Transverse colon (tissue), 4 donors: ENCODE measurements at regions of chr14 and their contacts with region 1.

Region 1: GRCh38 chr14:63276492-63277342 is 42.0 kb downstream of the GPHB5 start:
- DNase-seq: no peak
- H3K4me3 ChIP-seq: no peak overlapping the region
- H3K27ac ChIP-seq: no peak overlapping the region
- H3K4me1 ChIP-seq: no peaks in the 10 kb centered on the region
- H3K27me3 ChIP-seq: no peaks in the 10 kb centered on the region
- CTCF ChIP-seq: peak; percentile 67 to 79 (median 69)
- EP300 ChIP-seq: no peak
- POLR2A ChIP-seq: no peak

Region 2: DNA sequence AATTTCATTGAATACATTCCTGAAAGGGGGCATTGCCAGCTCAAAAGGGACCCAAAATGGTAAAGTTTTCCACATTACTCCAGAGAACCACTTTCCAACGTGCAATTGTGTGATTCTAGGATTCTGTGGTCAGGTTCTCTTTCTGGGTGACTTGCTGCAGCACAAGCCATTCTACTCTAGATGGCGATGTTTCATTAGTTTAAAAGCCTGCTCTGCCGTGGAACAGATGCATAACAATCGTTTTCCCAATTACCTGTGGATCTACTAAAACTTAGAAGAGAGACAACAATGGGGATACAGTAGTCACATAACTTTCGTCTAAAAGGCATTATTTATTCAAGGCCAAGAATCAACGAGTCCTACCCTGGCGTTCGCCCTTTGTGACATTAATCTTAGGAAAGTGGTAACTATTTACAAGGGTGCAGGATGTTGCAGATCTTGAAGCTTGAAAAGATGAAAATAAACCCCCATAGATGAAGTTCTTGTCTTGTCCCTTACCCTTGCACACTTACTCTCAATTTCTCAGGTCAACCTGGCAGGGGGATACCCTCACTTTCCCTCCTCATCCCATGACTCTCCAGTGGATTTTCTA is 1113.6 kb before region 1 on chr14:
- in situ Hi-C with region 1: loop called in 1 of 4 experiments (anchors 25 kb)
- intact Hi-C with region 1: no loop called
- DNase-seq: no peak
- H3K4me3 ChIP-seq: no peak overlapping the region
- H3K27ac ChIP-seq: no peak overlapping the region
- H3K4me1 ChIP-seq: no peaks in the 10 kb centered on the region
- H3K27me3 ChIP-seq: no peaks in the 10 kb centered on the region
- CTCF ChIP-seq: peak; percentile 37 to 52 (median 43)
- EP300 ChIP-seq: no peak
- POLR2A ChIP-seq: no peak

Region 3: GRCh38 chr14:62179367-62180018 is 1097.2 kb before region 1 on chr14:
- in situ Hi-C with region 1: loop called in 3 of 4 experiments (anchors 25 kb)
- intact Hi-C with region 1: no loop called
- DNase-seq: peak; percentile 15
- H3K4me3 ChIP-seq: no peak overlapping the region
- H3K27ac ChIP-seq: no peak overlapping the region
- H3K4me1 ChIP-seq: no peaks in the 10 kb centered on the region
- H3K27me3 ChIP-seq: no peaks in the 10 kb centered on the region
- CTCF ChIP-seq: peak in 3 of 5 experiments; percentile 8 to 24 (median 24)
- EP300 ChIP-seq: no peak
- POLR2A ChIP-seq: no peak

Region 4: DNA sequence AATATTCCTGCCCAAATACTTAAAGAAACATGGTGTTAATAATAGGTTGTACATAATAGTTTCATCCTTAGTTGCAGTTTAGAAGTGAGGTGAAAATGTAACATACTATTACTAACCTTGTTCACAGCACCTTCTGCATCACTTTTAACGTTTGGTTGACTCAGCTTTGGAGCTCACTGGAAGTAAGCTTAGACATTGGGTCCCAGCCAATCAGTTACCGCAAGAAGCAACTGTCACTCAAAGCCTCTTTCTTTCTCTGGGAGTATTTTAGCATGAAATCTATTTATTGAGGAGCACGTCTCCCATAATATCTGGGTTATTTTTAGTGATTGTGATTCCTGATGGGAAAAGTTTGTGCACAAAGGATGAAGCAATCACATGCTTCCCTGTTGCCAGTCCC is 1041.9 kb before region 1 on chr14:
- in situ Hi-C with region 1: no loop called
- intact Hi-C with region 1: no loop called
- DNase-seq: no peak
- H3K4me3 ChIP-seq: no peak overlapping the region
- H3K27ac ChIP-seq: no peak overlapping the region
- H3K4me1 ChIP-seq: no peaks in the 10 kb centered on the region
- H3K27me3 ChIP-seq: no peaks in the 10 kb centered on the region
- CTCF ChIP-seq: no peak
- EP300 ChIP-seq: no peak
- POLR2A ChIP-seq: no peak

Region 5: GRCh38 chr14:63174760-63175211 is 101.9 kb before region 1 on chr14:
- in situ Hi-C with region 1: loop called in 2 of 4 experiments (anchors 10 kb)
- intact Hi-C with region 1: loop called (anchors 2 kb)
- DNase-seq: no peak
- H3K4me3 ChIP-seq: no peak overlapping the region
- H3K27ac ChIP-seq: no peak overlapping the region
- H3K4me1 ChIP-seq: no peaks in the 10 kb centered on the region
- H3K27me3 ChIP-seq: no peaks in the 10 kb centered on the region
- CTCF ChIP-seq: peak; percentile 35 to 53 (median 44)
- EP300 ChIP-seq: no peak
- POLR2A ChIP-seq: no peak